CD8-positive, alpha-beta memory T cell (primary cell): ENCODE measurements at regions of chr15 and their contacts with region 1.

Region 1: DNA sequence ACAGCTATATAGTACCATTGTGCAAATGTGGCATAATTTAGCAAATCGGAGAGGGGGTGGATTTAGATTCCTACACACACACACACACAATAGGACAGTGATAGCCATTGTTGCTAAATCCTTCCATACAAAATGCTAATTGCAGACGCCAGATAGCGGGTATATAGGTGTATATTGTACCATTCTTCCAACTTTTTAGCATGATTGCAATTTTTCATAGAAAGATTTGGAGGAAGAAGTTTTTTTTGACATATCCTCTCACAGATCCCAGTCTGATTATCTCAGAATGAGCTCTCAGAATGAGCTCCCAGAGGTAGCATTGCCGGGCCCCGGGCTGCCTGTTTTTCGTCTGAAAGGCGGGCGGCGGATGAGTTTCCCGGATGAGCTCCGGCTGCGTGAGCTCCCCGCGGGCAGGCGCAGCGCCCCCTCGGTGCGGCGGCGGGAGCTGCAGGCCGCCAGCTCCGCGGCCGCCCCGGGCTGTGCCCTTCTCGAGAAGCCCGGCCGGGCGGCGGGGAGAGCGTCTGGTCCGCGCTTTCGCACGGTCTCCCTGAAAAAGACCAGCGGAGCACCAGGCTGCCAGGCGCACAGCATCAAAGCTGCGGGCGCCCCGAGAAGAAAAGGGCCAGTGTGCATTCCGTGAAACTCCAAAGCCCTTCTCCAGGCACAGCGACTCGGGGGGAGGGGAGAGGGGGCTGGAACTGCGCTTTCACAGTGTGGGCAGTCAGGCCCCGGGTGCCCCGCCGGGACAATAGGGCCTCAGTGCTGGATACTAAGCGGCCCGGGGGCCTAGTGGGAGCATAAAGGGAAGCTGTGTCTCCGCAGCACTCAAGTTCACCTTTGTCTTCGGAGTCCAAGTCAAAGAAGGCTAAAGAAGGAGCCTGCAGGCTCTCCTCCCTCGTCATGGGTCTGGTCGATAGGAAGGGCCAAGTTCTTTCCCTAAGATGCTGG is 12.0 kb upstream of the SHC4 start:
- DNase-seq: peak; percentile 48 to 73 (median 65)
- H3K4me3 ChIP-seq: peak overlapping the region; percentile 60
- H3K4me3 Mint-ChIP-seq: peak overlapping the region in 6 of 7 donors; percentile 47 to 82 (median 68)
- H3K27ac ChIP-seq: no peak overlapping the region
- H3K27ac Mint-ChIP-seq: no peak overlapping the region
- H3K4me1 ChIP-seq: peaks cover 3% of the 10 kb centered on the region
- H3K4me1 Mint-ChIP-seq: peaks cover 1 to 5% (median 4%) of the 10 kb centered on the region in 3 donors
- H3K27me3 ChIP-seq: peaks cover 8% of the 10 kb centered on the region
- H3K27me3 Mint-ChIP-seq: peaks cover 20 to 46% of the 10 kb centered on the region in 2 donors

Region 2: GRCh38 chr15:48963524-48964113 is 12.1 kb before region 1 on chr15 and contains the start of gene SHC4:
- CTCF ChIA-PET with region 1: interaction called, 11 read pairs
- POLR2A ChIA-PET with region 1: interaction called, 4 read pairs
- DNase-seq: peak in 1 of 5 donors; percentile 9
- H3K4me3 ChIP-seq: peak within 1 kb of the TSS; percentile 21
- H3K4me3 Mint-ChIP-seq: peak within 1 kb of the TSS; percentile 63 to 89 (median 77)
- H3K27ac ChIP-seq: no peak within 1 kb of the TSS
- H3K27ac Mint-ChIP-seq: peak within 1 kb of the TSS in 4 of 8 donors; percentile 8 to 70 (median 22)
- H3K4me1 ChIP-seq: peaks cover 26% of the 10 kb centered on the region
- H3K4me1 Mint-ChIP-seq: peaks cover 35 to 39% (median 38%) of the 10 kb centered on the region in 3 donors
- H3K27me3 ChIP-seq: peaks cover 12% of the 10 kb centered on the region
- H3K27me3 Mint-ChIP-seq: peaks cover 16 to 31% of the 10 kb centered on the region in 2 donors
- total RNA-seq, gene SHC4: 5.0 to 5.7 TPM

Region 3: GRCh38 chr15:48992545-48992944 is 16.8 kb after region 1 on chr15:
- CTCF ChIA-PET with region 1: interaction called, 27 read pairs
- POLR2A ChIA-PET with region 1: no interaction called
- DNase-seq: no peak
- H3K4me3 ChIP-seq: no peak overlapping the region
- H3K4me3 Mint-ChIP-seq: no peak overlapping the region
- H3K27ac ChIP-seq: no peak overlapping the region
- H3K27ac Mint-ChIP-seq: peak overlapping the region in 2 of 8 donors; percentile 6 to 18
- H3K4me1 ChIP-seq: no peaks in the 10 kb centered on the region
- H3K4me1 Mint-ChIP-seq: no peaks in the 10 kb centered on the region
- H3K27me3 ChIP-seq: no peaks in the 10 kb centered on the region
- H3K27me3 Mint-ChIP-seq: no peaks in the 10 kb centered on the region

Region 4: DNA sequence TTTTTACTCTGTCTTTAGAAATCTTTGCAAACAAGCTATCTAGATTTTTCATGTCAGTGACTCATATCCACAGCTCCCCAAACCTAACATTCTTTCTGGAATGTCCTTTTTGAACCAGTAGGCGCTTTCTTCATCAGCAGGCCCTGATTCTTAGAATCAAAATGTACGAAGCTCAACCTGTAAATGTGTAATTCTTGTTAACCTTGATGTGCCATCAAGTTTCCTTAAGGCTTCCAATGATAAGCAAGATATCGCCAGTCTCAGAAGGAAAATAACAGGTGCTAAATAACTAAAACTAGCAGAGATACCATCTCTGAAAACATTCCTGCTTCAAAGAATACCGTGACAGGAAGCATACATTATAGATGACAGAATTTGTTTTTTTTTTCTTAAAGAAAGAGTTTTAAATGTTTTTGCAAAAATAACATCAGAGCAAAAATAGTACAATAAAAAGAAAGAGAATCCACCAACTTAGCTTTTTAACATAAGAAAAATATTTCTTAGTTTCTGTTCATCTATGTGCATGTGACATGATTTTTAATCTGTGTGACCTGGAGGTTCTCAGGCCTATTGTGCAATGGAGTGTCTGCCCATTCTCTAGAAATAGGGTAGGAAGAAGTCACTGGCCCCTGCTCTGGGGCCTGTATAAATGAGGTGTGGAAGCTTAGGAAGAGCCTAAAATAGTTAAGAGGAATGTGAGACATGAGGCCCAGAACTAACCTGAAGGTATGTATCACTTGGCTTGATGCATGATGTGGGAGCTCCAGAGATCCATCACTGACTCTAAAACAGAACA is 85.2 kb after region 1 on chr15:
- CTCF ChIA-PET with region 1: no interaction called
- POLR2A ChIA-PET with region 1: no interaction called
- DNase-seq: no peak
- H3K4me3 ChIP-seq: no peak overlapping the region
- H3K4me3 Mint-ChIP-seq: no peak overlapping the region
- H3K27ac ChIP-seq: no peak overlapping the region
- H3K27ac Mint-ChIP-seq: peak overlapping the region in 1 of 8 donors; percentile 12
- H3K4me1 ChIP-seq: peaks cover 25% of the 10 kb centered on the region
- H3K4me1 Mint-ChIP-seq: no peaks in the 10 kb centered on the region
- H3K27me3 ChIP-seq: no peaks in the 10 kb centered on the region
- H3K27me3 Mint-ChIP-seq: peaks cover 0 to 4% of the 10 kb centered on the region in 2 donors

Region 5: GRCh38 chr15:49145651-49146609 is 170.2 kb after region 1 on chr15:
- CTCF ChIA-PET with region 1: no interaction called
- POLR2A ChIA-PET with region 1: no interaction called
- DNase-seq: no peak
- H3K4me3 ChIP-seq: no peak overlapping the region
- H3K4me3 Mint-ChIP-seq: no peak overlapping the region
- H3K27ac ChIP-seq: no peak overlapping the region
- H3K27ac Mint-ChIP-seq: peak overlapping the region in 3 of 8 donors; percentile 10 to 49 (median 28)
- H3K4me1 ChIP-seq: peaks cover 33% of the 10 kb centered on the region
- H3K4me1 Mint-ChIP-seq: peaks cover 41 to 72% (median 69%) of the 10 kb centered on the region in 3 donors
- H3K27me3 ChIP-seq: no peaks in the 10 kb centered on the region
- H3K27me3 Mint-ChIP-seq: no peaks in the 10 kb centered on the region

Region 6: GRCh38 chr15:49458145-49458544 is 482.4 kb after region 1 on chr15:
- CTCF ChIA-PET with region 1: no interaction called
- POLR2A ChIA-PET with region 1: no interaction called
- DNase-seq: no peak
- H3K4me3 ChIP-seq: no peak overlapping the region
- H3K4me3 Mint-ChIP-seq: no peak overlapping the region
- H3K27ac ChIP-seq: no peak overlapping the region
- H3K27ac Mint-ChIP-seq: no peak overlapping the region
- H3K4me1 ChIP-seq: no peaks in the 10 kb centered on the region
- H3K4me1 Mint-ChIP-seq: no peaks in the 10 kb centered on the region
- H3K27me3 ChIP-seq: no peaks in the 10 kb centered on the region
- H3K27me3 Mint-ChIP-seq: peaks cover 2 to 23% of the 10 kb centered on the region in 2 donors